MCF 10A (cell line): ENCODE measurements at regions of chr7 and their contacts with region 1.

Region 1: DNA sequence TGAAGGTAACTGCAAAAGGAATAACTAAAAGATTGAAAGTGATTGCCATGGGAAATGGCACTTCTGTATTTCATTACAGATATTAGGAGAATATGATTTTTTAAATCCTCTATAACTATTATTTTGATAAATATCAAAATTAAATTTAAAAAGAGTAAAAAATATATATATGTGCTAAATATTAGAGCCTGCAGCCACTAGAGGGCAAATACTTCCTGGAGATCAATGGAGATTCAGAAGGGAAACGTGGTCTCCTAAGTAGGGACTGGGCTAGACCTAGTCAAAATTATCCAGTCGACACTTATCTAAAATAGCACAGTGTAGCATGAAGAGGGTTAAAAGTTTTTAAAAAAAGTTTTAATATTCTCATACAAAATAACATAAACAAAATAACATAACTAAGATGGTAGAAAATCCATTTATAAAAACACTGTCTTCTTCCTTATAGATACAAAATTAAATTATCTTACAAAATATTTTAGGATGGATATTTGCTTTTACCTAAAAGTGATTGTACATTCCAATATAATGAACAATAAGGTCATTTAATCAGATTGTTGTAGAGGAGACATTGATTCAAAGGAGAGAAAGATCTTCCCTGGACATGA is 434.3 kb downstream of the MDFIC start:
- DNase-seq: peak; percentile 8
- H3K4me3 Mint-ChIP-seq: no peak overlapping the region
- H3K27ac Mint-ChIP-seq: no peak overlapping the region
- H3K4me1 Mint-ChIP-seq: no peaks in the 10 kb centered on the region
- H3K27me3 Mint-ChIP-seq: peaks cover 62% of the 10 kb centered on the region
- CTCF ChIP-seq: peak; percentile 45

Region 2: DNA sequence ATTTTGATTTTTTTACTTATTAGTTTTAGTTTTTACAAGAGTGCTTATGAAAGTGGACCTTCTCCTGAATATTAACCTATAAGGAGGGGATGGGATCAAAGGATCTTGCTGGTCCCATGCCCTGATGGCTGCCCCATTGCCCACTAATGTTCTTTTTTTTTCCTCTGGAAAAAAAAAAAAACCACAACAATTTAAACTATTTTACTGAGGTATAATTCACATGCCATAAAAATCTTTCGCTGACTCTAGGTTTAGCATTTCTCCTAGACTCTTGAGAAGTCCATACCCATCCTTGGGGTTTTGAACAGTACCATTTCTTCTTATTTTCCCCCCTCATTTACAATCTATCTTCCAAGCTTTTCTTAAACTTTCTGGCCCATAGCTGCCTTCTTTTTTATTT is 192.5 kb after region 1 on chr7:
- CTCF ChIA-PET with region 1: no interaction called
- POLR2A ChIA-PET with region 1: no interaction called
- intact Hi-C with region 1: no loop called
- DNase-seq: no peak
- H3K4me3 Mint-ChIP-seq: no peak overlapping the region
- H3K27ac Mint-ChIP-seq: no peak overlapping the region
- H3K4me1 Mint-ChIP-seq: no peaks in the 10 kb centered on the region
- H3K27me3 Mint-ChIP-seq: peaks cover 56% of the 10 kb centered on the region
- CTCF ChIP-seq: no peak

Region 3: GRCh38 chr7:115679976-115680375 is 323.7 kb after region 1 on chr7:
- CTCF ChIA-PET with region 1: interaction called, 4 read pairs
- POLR2A ChIA-PET with region 1: no interaction called
- intact Hi-C with region 1: loop called (anchors 10 kb)
- DNase-seq: peak; percentile 48
- H3K4me3 Mint-ChIP-seq: no peak overlapping the region
- H3K27ac Mint-ChIP-seq: no peak overlapping the region
- H3K4me1 Mint-ChIP-seq: no peaks in the 10 kb centered on the region
- H3K27me3 Mint-ChIP-seq: peaks cover 93% of the 10 kb centered on the region
- CTCF ChIP-seq: peak; percentile 38

Region 4: DNA sequence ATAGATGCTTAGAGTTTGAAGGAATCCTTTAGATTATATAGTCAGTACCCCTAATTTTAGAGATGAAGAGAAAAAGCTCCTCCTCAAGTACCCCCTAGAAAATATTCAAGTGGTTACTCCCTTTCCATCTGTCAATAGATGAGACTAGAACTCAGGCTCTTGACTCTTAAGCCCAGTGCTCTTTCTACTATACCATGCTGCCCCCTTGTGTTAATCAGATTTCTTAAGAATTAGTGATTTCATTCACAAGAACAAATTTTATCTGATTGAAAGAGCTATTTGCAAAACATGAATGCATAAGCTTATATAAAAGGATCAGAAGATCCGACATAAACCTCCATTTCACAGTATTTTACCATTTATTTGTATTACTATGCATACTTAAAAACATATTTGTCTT is 495.0 kb after region 1 on chr7:
- CTCF ChIA-PET with region 1: no interaction called
- POLR2A ChIA-PET with region 1: no interaction called
- intact Hi-C with region 1: loop called (anchors 5 kb)
- DNase-seq: peak; percentile 50
- H3K4me3 Mint-ChIP-seq: no peak overlapping the region
- H3K27ac Mint-ChIP-seq: no peak overlapping the region
- H3K4me1 Mint-ChIP-seq: no peaks in the 10 kb centered on the region
- H3K27me3 Mint-ChIP-seq: peaks cover 92% of the 10 kb centered on the region
- CTCF ChIP-seq: peak; percentile 35